Mammary epithelial cell (primary cell): ENCODE measurements at regions of chr11 and their contacts with region 1.

Region 1: DNA sequence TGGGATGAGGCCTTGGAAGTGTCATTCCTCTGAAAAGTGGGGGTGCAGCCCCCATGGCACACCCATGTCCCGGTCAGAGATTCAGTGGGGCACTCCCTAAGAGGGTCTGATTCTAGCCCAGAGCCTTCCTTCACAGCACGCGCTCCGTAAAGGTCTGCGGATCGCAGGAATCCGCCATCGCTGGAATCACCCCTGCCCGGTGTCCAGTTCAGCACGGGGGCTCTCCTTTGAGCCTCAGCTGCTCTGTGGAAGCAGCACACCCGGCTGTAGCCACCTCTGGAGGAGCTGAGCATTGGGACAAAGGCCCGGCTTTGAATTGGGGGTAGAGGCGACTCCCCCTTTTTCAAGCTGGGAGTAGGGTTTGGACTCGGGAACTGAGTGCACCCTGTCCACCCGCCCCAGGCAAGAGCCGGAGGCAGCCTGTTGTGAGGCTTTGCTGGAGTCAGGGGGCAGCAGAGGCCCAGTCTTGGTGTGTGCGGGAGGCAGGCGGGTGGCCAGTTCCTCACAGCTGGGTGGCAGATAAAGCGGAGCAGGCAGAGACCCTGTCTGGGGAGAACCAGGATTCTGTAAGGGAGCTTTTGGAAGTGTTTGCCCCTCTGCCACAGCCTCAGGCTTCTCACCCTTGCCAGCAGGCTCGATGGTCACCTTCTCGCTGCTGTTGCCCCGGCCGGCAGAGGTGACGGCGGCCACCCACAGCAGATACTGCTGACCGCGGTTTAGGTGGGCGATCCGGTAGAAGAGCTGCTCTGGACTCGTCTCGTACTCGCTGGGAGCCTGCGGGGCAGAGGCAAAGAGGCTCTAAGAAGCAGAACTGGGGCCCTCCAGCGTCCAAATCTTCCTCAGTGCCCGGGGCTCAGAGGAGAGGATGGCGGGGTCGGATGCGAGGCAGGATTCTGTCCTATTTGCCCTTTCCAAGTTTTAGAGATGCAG is 115.9 kb downstream of the CEP164 start:
- DNase-seq: no peak
- H3K4me3 ChIP-seq: no peak overlapping the region
- H3K27ac ChIP-seq: no peak overlapping the region
- H3K4me1 ChIP-seq: no peaks in the 10 kb centered on the region
- H3K27me3 ChIP-seq: peaks cover 3% of the 10 kb centered on the region
- CTCF ChIP-seq: peak; percentile 13 to 20

Region 2: DNA sequence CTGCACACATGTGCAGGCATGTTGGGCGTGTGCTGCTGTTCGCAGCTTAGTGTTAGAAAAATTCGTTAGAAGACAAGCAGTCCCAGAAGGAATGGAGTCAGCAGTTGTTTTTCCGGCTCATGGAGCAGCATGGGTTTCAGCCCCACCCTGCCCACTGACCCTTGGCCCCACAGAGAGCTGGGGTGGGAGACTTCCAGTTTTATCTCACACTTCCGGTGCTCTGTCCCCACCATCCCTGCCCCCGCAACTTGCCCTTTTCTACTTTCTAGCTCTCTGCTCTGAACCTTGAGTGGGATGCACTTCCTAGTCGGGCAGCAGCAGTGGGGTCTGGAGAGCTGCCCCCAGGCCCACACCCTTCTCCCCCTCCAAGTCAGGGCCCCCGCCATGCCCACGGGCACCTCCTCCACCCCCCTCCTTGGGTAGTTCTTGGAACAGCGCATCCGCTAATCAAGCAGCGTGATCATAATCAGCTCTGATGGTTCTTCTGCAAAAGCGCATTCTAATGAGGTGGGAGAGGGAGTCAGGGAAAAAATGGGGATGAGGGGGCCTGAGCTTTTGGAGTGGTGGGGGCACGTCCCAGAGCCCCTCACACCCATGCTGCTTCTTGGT is 68.5 kb after region 1 on chr11:
- CTCF ChIA-PET with region 1: no interaction called
- dilution Hi-C with region 1: loop called (anchors 5 kb)
- in situ Hi-C with region 1: no loop called
- intact Hi-C with region 1: no loop called
- DNase-seq: no peak
- H3K4me3 ChIP-seq: no peak overlapping the region
- H3K27ac ChIP-seq: no peak overlapping the region
- H3K4me1 ChIP-seq: no peaks in the 10 kb centered on the region
- H3K27me3 ChIP-seq: peaks cover 2% of the 10 kb centered on the region
- CTCF ChIP-seq: no peak

Region 3: DNA sequence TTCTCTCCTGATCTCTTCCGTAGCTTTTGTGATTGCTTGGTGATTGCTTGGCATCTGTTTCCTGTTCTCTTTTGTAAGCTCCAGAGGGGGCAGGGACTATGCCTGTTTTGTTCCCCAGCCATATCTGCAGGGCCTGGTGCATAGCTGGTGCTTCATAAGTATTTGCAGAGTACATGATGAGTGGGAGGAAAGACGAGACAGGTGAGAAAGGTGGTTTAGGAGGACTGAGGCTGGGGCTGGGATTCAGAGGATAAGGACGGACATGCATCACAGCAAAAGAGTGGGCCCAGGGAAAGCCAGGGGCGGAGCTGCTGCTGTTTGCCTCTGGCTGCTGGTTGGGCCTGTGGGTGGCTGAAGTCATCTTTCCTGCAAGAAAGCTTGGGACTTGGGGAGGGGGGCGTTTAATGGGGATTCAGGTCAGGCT is 291.1 kb after region 1 on chr11:
- CTCF ChIA-PET with region 1: no interaction called
- dilution Hi-C with region 1: loop called (anchors 5 kb)
- in situ Hi-C with region 1: no loop called
- intact Hi-C with region 1: no loop called
- DNase-seq: no peak
- H3K4me3 ChIP-seq: no peak overlapping the region
- H3K27ac ChIP-seq: no peak overlapping the region
- H3K4me1 ChIP-seq: no peaks in the 10 kb centered on the region
- H3K27me3 ChIP-seq: no peaks in the 10 kb centered on the region
- CTCF ChIP-seq: no peak